PC-9 (cell line): ENCODE measurements at regions of chr3 and their contacts with region 1.

Region 1: DNA sequence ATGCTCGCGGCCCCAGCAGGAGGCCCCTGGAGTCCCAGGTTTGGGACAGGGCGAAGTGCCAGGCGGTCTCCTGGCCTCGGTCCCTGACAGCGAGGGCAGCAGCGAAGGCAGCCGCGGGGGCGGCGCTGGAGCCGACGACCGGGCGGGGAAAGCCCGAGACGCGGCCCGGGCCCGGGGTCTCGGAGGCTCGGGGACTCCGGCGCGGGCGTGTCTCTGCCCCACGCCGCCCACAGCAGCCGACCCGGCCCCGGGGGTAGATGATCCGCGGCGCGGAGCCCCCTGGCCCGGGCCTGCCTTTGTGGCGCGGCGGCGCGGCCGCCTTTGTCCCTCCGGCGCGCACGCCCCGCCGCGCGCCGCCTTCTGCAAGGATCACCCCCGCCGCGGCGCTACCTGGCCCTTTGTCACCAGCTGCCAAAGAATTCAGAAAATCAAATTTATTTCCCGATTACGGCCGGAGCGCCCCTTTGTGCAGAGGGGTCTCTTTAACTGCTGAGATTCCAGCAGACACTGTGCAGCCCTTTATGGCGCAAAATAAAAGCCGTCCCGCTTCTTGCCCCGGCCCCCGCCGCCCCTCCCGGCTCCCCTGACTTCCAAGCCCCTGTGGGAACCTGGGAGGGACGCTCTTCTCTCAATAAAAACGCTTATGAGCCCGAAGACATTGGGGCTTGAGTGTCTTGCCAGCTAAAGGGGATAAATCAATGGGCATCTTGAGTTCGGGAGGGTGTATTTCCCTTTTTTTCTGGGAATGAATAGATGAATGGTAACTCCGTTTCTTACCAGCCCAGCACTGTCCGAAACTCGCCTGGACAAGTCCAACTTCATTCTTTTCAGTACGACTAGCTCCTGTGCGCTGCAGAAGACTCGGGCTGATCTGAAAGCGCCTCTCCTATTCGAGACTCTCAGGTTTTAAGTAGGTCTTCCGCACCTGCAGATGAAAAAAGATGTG is 68.4 kb downstream of the HES1 start:
- DNase-seq: peak; percentile 62 to 78
- H3K4me3 ChIP-seq: peak overlapping the region; percentile 58
- H3K27ac ChIP-seq: peak overlapping the region; percentile 71
- H3K4me1 ChIP-seq: peaks cover 47% of the 10 kb centered on the region
- H3K27me3 ChIP-seq: no peaks in the 10 kb centered on the region
- CTCF ChIP-seq: no peak

Region 2: DNA sequence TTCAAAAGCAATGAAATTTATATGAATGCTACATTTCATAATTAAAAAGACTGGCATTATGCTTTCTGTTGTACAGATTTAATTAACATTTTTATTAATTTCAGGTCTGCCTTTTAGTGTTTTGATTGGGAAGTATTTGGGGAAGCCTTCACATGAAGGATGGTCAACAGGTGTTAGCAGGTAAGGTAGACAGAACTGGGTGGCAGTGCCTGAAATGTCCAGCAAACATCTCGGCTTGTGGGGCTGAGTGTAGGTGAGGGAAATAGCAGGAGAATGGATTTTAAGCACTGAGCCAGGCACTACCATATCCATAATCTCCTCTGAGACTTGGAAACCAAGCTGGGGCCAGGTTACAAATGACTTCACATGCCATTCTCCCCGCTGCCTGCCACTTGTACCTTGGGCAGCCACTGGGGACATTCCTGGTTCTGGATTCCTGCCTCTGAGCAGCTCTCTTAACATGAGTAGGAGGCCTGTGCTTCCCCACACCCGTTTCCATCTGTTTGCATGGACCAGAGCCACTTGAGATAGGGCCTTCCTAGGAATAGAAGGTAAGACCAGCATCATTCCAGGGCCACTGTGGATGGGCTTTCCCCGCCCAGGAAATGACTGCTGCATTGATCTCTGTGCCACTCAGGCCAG is 194.3 kb before region 1 on chr3:
- CTCF ChIA-PET with region 1: no interaction called
- POLR2A ChIA-PET with region 1: no interaction called
- intact Hi-C with region 1: loop called (anchors 5 kb)
- DNase-seq: no peak
- H3K4me3 ChIP-seq: no peak overlapping the region
- H3K27ac ChIP-seq: no peak overlapping the region
- H3K4me1 ChIP-seq: peaks cover 13% of the 10 kb centered on the region
- H3K27me3 ChIP-seq: no peaks in the 10 kb centered on the region
- CTCF ChIP-seq: no peak

Region 3: GRCh38 chr3:194158922-194159439 is 45.3 kb before region 1 on chr3:
- CTCF ChIA-PET with region 1: no interaction called
- POLR2A ChIA-PET with region 1: no interaction called
- intact Hi-C with region 1: loop called (anchors 5 kb)
- DNase-seq: peak; percentile 86 to 98
- H3K4me3 ChIP-seq: no peak overlapping the region; the same call in 1 of the 2 replicates
- H3K27ac ChIP-seq: peak overlapping the region; percentile 86
- H3K4me1 ChIP-seq: peaks cover 57% of the 10 kb centered on the region
- H3K27me3 ChIP-seq: no peaks in the 10 kb centered on the region
- CTCF ChIP-seq: no peak

Region 4: GRCh38 chr3:194194051-194194756 is 10.1 kb before region 1 on chr3:
- CTCF ChIA-PET with region 1: no interaction called
- POLR2A ChIA-PET with region 1: no interaction called
- intact Hi-C with region 1: no loop called
- DNase-seq: no peak
- H3K4me3 ChIP-seq: no peak overlapping the region
- H3K27ac ChIP-seq: no peak overlapping the region
- H3K4me1 ChIP-seq: no peaks in the 10 kb centered on the region
- H3K27me3 ChIP-seq: no peaks in the 10 kb centered on the region
- CTCF ChIP-seq: no peak

Region 5: GRCh38 chr3:194296454-194297263 is 92.3 kb after region 1 on chr3:
- CTCF ChIA-PET with region 1: no interaction called
- POLR2A ChIA-PET with region 1: no interaction called
- intact Hi-C with region 1: loop called (anchors 1 kb)
- DNase-seq: peak; percentile 94 to 98
- H3K4me3 ChIP-seq: peak overlapping the region; percentile 57
- H3K27ac ChIP-seq: peak overlapping the region; percentile 97
- H3K4me1 ChIP-seq: peaks cover 65% of the 10 kb centered on the region
- H3K27me3 ChIP-seq: no peaks in the 10 kb centered on the region
- CTCF ChIP-seq: peak; percentile 30; the same call in 1 of the 2 replicates